ENCODE measurements at regions of chr12 and their contacts with region 1.

Region 1: DNA sequence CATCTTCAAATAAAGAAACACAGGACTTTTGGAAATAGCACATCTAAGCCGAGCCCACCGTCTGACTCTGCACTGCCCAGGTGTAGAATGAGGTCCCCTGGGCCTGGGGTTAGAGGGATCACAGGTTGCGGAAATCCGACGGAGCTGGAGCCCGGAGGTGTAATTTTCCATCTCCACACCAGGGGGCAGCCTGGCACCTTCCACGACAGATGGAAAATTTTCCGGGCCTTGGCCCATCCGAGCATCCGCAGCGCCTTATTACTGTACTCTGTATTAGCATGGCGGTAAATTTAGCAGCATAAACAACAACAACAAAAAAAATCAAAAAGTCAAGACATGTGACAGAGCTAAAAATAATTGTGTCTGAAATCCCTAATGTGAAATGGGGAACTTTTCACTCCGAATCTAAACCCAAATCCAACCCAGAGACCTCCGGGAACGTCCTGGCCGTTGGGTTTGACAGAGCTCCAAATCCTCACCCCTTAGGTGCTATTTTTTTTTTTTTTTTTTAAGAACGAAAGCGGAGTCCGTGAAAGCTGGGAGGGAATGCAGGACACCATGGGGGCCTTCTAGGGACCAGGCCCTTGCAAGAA is 93.9 kb downstream of the KSR2 start:
- DNase-seq: peak; percentile 88
- ATAC-seq: peak; percentile 81
- H3K4me3 Mint-ChIP-seq: no peak overlapping the region
- H3K27ac Mint-ChIP-seq: no peak overlapping the region
- H3K4me1 Mint-ChIP-seq: peaks cover 22% of the 10 kb centered on the region
- H3K27me3 Mint-ChIP-seq: no peaks in the 10 kb centered on the region
- CTCF ChIP-seq: peak; percentile 94

Region 2: GRCh38 chr12:117732761-117733160 is 142.2 kb before region 1 on chr12:
- CTCF ChIA-PET with region 1: no interaction called
- POLR2A ChIA-PET with region 1: no interaction called
- DNase-seq: no peak
- ATAC-seq: no peak
- H3K4me3 Mint-ChIP-seq: no peak overlapping the region
- H3K27ac Mint-ChIP-seq: no peak overlapping the region
- H3K4me1 Mint-ChIP-seq: peaks cover under 1% of the 10 kb centered on the region
- H3K27me3 Mint-ChIP-seq: no peaks in the 10 kb centered on the region; the same call in 1 of the 2 replicates
- CTCF ChIP-seq: no peak

Region 3: DNA sequence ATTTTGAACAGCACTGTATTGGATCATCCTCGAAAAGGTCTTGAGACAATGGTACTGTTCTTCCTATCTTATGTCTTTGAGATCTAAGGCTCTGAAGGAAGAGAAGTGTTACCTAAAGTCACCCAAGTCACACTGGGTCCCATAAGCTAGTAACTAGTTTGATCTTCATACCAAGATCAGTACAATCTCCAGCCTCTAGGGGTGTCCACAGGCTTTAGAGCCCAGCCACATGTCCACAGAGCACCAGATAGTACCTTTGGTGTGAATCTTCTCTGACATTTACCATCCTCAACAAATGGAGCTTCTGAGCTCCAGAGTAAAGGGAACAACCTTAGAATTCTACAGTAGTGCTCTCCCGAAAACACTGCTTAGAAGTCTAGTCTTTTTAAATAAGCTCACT is 15.2 kb after region 1 on chr12:
- CTCF ChIA-PET with region 1: interaction called, 13 read pairs
- POLR2A ChIA-PET with region 1: no interaction called
- DNase-seq: no peak
- ATAC-seq: peak; percentile 87
- H3K4me3 Mint-ChIP-seq: no peak overlapping the region
- H3K27ac Mint-ChIP-seq: no peak overlapping the region
- H3K4me1 Mint-ChIP-seq: no peaks in the 10 kb centered on the region
- H3K27me3 Mint-ChIP-seq: no peaks in the 10 kb centered on the region
- CTCF ChIP-seq: no peak

Region 4: GRCh38 chr12:118016424-118017264 is 141.7 kb after region 1 on chr12 and contains the start of gene RFC5:
- CTCF ChIA-PET with region 1: interaction called, 25 read pairs
- POLR2A ChIA-PET with region 1: interaction called, 3 read pairs
- DNase-seq: peak; percentile 99
- ATAC-seq: peak; percentile 97
- H3K4me3 Mint-ChIP-seq: peak within 1 kb of the TSS; percentile 93
- H3K27ac Mint-ChIP-seq: peak within 1 kb of the TSS; percentile 82
- H3K4me1 Mint-ChIP-seq: peaks cover 18% of the 10 kb centered on the region
- H3K27me3 Mint-ChIP-seq: no peaks in the 10 kb centered on the region; the same call in none of the 2 replicates
- CTCF ChIP-seq: no peak
- total RNA-seq, gene RFC5: 34.5 to 35.9 TPM (median 35.2 TPM) in 3 replicates

Region 5: DNA sequence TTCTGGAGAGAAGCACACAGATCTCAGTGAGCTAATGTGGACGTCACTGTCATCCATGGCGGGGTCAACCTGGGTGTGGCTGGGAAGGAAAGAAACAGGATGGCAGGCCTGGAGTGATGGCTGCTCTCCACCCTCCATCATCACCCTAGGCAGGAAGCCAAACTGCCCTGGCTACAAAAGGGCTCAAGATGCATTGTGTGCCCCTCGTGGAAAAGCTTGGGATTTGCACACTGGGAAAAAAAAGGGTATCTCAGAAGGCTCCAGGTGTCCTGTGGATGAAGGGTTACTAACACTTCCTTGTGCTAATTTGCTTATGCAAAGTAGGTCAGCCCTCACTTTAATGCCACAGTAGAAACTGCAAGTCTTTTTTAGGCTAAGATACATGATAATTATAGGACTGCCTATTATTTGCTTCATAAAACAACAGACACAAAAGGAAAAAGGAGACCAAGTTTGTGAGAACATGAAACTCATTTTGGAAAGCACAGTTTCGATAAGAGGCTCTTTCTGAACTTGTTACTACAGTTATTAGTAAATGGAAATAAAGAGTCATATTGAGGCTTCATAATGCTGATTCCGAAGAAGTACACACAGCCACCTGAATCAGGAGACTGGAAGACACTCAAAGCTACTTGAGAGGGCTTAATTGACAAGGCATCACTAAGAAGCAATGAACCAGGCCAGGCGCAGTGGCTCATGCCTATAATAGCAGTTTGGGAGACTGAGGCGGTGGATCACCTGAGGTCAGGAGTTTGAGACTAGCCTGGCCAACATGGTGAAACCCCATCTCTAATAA is 160.5 kb after region 1 on chr12:
- CTCF ChIA-PET with region 1: interaction called, 32 read pairs
- POLR2A ChIA-PET with region 1: no interaction called
- DNase-seq: no peak
- ATAC-seq: peak; percentile 34; the same call in 1 of the 2 replicates
- H3K4me3 Mint-ChIP-seq: no peak overlapping the region
- H3K27ac Mint-ChIP-seq: peak overlapping the region; percentile 60
- H3K4me1 Mint-ChIP-seq: no peaks in the 10 kb centered on the region; the same call in 1 of the 2 replicates
- H3K27me3 Mint-ChIP-seq: no peaks in the 10 kb centered on the region
- CTCF ChIP-seq: no peak

Region 6: GRCh38 chr12:118055144-118055557 is 180.2 kb after region 1 on chr12:
- CTCF ChIA-PET with region 1: interaction called, 13 read pairs
- POLR2A ChIA-PET with region 1: no interaction called
- DNase-seq: peak; percentile 77
- ATAC-seq: peak; percentile 71
- H3K4me3 Mint-ChIP-seq: no peak overlapping the region
- H3K27ac Mint-ChIP-seq: no peak overlapping the region
- H3K4me1 Mint-ChIP-seq: peaks cover 30% of the 10 kb centered on the region
- H3K27me3 Mint-ChIP-seq: no peaks in the 10 kb centered on the region
- CTCF ChIP-seq: peak; percentile 42; the same call in 1 of the 2 replicates

Region 7: GRCh38 chr12:118064608-118065007 is 189.7 kb after region 1 on chr12:
- CTCF ChIA-PET with region 1: interaction called, 20 read pairs
- POLR2A ChIA-PET with region 1: interaction called, 3 read pairs
- DNase-seq: peak; percentile 26
- ATAC-seq: peak; percentile 42
- H3K4me3 Mint-ChIP-seq: peak overlapping the region; percentile 89
- H3K27ac Mint-ChIP-seq: peak overlapping the region; percentile 82
- H3K4me1 Mint-ChIP-seq: peaks cover 38% of the 10 kb centered on the region
- H3K27me3 Mint-ChIP-seq: no peaks in the 10 kb centered on the region
- CTCF ChIP-seq: peak; percentile 15; the same call in 1 of the 2 replicates

Measured in WTC11 (cell line).